ENCODE measurements at regions of chr4 and their contacts with region 1.

Region 1: DNA sequence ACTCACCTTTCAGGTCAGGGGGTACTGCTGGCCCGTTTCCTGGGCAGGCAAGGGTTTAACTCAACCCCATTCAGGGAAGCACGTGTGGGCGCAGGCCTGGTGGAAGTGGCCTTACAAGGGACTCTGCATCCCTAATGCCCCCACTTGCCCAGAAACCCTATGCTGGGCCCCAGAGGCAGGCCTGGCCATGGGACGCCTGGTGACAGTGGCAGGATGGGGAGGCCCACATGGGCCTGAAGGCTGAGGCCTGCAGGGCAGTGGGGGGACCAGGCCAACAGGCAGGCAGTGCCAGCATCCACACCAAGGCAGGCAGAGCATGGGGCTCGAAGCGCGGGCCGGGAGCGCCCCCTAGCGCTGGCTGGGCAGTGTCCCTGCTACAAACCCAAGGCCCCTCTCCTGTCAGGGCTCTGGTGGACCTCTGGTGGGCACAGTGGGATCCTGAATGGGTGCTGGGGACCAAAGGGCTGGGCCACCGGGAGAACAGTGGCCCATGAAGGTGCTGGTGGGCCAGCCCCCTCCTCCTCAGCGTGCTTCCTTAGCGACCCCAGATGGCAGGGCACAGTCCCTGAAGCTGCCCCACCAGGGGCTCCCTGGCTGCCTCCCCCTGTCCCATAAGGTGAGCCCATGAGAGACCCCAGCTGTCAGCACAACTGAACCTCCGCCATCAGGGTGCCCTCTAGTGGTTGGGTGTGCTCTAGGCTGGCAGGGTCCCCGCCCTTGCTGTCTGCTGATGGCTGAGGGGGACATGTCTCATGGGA is 16.8 kb downstream of the FGFR3 start:
- DNase-seq: peak; percentile 63 to 78 (median 70)
- H3K4me3 ChIP-seq: no peak overlapping the region
- H3K27ac ChIP-seq: no peak overlapping the region
- H3K4me1 ChIP-seq: no peaks in the 10 kb centered on the region
- H3K27me3 ChIP-seq: no peaks in the 10 kb centered on the region
- CTCF ChIP-seq: peak; percentile 70 to 87 (median 81)
- POLR2A ChIP-seq: no peak

Region 2: DNA sequence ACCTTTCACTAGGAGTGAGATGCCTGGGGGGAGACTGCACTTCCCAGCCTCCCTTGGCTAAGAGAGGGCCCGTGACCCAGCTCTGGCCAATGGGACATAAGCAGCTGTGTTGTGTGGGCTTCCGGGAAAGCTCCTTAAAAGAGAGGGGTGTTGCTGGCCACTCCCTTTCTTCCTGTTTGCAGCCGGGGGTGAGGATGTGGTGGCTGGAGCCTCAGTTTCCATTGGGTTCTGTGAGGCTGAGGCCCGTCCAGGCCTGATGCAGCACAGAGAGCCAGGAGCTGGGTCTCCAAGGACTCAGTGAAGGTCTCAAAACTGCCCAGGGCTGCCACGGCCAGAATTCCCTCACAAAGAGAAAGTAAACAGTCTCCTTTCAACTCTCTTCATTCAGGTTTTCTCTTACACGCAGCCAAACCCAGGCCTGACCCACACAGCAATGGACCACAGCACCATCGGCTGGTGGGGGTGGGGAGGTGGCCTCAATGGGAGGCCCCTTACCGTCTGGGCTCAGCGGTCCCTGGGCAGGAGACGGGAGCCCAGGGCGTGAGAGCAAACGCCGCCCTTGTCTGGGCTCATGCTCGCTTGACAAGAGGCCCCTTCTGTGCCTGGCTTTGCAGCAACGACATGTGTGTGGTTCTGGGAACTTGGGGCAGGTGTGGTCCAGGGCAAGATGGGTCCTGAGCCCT is 410.3 kb before region 1 on chr4:
- intact Hi-C with region 1: loop called in 1 of 2 experiments (anchors 10 kb)
- DNase-seq: peak in 3 of 7 donors; percentile 2 to 11 (median 5)
- H3K4me3 ChIP-seq: no peak overlapping the region
- H3K27ac ChIP-seq: no peak overlapping the region
- H3K4me1 ChIP-seq: no peaks in the 10 kb centered on the region
- H3K27me3 ChIP-seq: peaks cover 42% of the 10 kb centered on the region
- CTCF ChIP-seq: no peak
- POLR2A ChIP-seq: no peak

Region 3: GRCh38 chr4:1746265-1746691 is 63.7 kb before region 1 on chr4:
- intact Hi-C with region 1: loop called (anchors 2 kb)
- DNase-seq: peak; percentile 61 to 79 (median 66)
- H3K4me3 ChIP-seq: no peak overlapping the region
- H3K27ac ChIP-seq: no peak overlapping the region
- H3K4me1 ChIP-seq: peaks cover 0 to 3% of the 10 kb centered on the region in 2 donors
- H3K27me3 ChIP-seq: peaks cover 4% of the 10 kb centered on the region
- CTCF ChIP-seq: peak; percentile 64 to 84 (median 70)
- POLR2A ChIP-seq: no peak

Region 4: DNA sequence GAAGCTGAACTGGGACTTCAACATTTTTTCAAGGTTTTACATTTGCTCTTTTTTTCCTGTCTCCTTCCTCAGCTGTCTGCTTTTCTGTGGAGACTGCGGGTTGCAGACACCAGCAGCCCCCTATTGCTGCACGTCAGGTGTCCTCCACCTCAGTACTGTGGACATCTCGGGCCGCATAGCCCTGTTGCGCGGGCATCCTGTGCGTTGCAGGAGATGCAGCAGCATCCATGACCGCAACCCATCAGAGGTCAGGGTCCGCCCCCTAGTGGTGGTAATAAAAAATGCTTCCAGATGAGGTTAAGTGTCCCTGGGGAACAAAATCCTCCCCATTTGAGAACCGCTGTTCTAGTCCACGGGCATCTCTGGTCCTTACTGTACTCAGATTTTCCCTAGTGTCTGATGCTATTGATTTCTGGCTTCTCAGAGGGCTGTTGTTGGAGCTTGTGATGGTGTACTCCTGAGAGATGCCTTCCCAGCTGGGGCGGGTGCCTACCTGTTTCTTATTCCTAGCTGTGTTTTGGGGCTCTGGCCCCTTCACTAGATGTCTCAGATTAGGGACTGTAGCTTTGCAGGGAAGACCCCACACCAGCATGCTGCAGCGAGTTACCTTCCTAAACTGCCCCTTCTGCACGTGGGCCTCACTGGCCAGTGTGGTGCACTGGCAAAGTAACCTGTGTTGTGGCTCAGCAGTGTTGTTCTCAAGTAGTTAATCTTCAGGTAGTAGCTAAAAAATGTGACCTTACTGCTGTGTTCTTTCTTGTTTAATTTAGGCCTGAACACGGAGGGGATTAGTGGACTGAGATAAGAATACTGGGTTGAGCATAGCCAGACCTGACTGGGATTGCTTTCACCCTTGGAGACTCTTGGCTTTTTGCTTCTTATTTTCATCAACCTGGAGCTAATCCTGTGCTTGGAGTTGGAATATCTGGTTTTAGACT is 89.5 kb after region 1 on chr4:
- intact Hi-C with region 1: loop called (anchors 10 kb)
- DNase-seq: peak; percentile 66 to 89 (median 78)
- H3K4me3 ChIP-seq: no peak overlapping the region
- H3K27ac ChIP-seq: no peak overlapping the region
- H3K4me1 ChIP-seq: no peaks in the 10 kb centered on the region
- H3K27me3 ChIP-seq: no peaks in the 10 kb centered on the region
- CTCF ChIP-seq: peak; percentile 87 to 95 (median 88)
- POLR2A ChIP-seq: no peak

Measured in adrenal gland (tissue), 19 donors.